Endothelial cell of umbilical vein (primary cell): ENCODE measurements at regions of chr5 and their contacts with region 1.

Region 1: GRCh38 chr5:96752341-96753016 is 55.3 kb downstream of the ERAP1 start:
- DNase-seq: peak; percentile 71
- H3K4me3 ChIP-seq: no peak overlapping the region
- H3K27ac ChIP-seq: no peak overlapping the region
- H3K4me1 ChIP-seq: peaks cover 3% of the 10 kb centered on the region
- H3K27me3 ChIP-seq: no peaks in the 10 kb centered on the region
- CTCF ChIP-seq: peak; percentile 36 to 55
- POLR2A ChIP-seq: no peak

Region 2: DNA sequence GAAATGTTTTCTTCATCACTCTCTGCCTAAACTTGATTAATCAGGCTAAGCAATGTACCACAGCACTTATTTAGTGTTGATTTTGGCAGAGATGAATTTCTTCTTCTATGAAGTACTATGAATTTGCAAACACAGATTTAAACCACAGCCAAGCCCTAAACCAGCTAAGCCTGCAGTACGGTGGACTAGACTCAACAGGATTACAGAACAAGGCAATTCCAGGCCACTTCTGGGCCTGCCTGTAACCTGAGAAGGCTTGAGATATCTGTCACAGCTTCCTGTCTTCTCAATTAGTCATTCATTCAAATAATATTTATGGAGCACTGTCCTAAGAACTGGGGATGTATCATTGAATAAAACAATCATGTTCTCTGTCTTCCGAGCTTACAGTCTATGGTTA is 122.7 kb before region 1 on chr5:
- CTCF ChIA-PET with region 1: no interaction called
- POLR2A ChIA-PET with region 1: no interaction called
- dilution Hi-C with region 1: no loop called
- intact Hi-C with region 1: no loop called
- DNase-seq: peak; percentile 44
- H3K4me3 ChIP-seq: no peak overlapping the region
- H3K27ac ChIP-seq: no peak overlapping the region
- H3K4me1 ChIP-seq: peaks cover 12% of the 10 kb centered on the region
- H3K27me3 ChIP-seq: no peaks in the 10 kb centered on the region
- CTCF ChIP-seq: no peak
- POLR2A ChIP-seq: no peak

Region 3: DNA sequence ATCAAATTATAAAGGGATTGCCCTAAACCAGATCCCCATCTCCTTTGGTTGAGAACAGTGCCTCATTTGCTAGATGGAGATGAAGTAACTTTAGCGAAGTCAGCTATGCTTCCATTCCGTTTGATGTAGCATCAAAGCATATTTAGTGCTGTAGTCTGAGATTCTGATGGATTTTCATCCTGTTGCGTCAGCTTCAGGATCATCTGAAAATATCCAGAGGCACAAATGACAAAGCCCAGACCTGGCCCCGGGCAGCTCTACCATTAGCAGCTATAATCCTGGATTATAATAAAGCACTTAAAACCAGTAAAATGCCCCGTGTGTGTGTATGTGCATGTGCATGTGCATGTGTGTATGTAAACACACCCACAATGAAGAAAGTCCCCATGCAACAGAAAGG is 10.5 kb after region 1 on chr5:
- CTCF ChIA-PET with region 1: interaction called, 62 read pairs
- POLR2A ChIA-PET with region 1: no interaction called
- dilution Hi-C with region 1: no loop called
- intact Hi-C with region 1: no loop called
- DNase-seq: no peak
- H3K4me3 ChIP-seq: no peak overlapping the region
- H3K27ac ChIP-seq: no peak overlapping the region
- H3K4me1 ChIP-seq: no peaks in the 10 kb centered on the region
- H3K27me3 ChIP-seq: no peaks in the 10 kb centered on the region
- CTCF ChIP-seq: no peak
- POLR2A ChIP-seq: no peak

Region 4: GRCh38 chr5:96781031-96781937 is 28.8 kb after region 1 on chr5:
- CTCF ChIA-PET with region 1: interaction called, 11 read pairs
- POLR2A ChIA-PET with region 1: no interaction called
- dilution Hi-C with region 1: no loop called
- intact Hi-C with region 1: no loop called
- DNase-seq: peak; percentile 53
- H3K4me3 ChIP-seq: no peak overlapping the region
- H3K27ac ChIP-seq: peak overlapping the region; percentile 63
- H3K4me1 ChIP-seq: peaks cover 19% of the 10 kb centered on the region
- H3K27me3 ChIP-seq: no peaks in the 10 kb centered on the region
- CTCF ChIP-seq: no peak
- POLR2A ChIP-seq: no peak

Region 5: DNA sequence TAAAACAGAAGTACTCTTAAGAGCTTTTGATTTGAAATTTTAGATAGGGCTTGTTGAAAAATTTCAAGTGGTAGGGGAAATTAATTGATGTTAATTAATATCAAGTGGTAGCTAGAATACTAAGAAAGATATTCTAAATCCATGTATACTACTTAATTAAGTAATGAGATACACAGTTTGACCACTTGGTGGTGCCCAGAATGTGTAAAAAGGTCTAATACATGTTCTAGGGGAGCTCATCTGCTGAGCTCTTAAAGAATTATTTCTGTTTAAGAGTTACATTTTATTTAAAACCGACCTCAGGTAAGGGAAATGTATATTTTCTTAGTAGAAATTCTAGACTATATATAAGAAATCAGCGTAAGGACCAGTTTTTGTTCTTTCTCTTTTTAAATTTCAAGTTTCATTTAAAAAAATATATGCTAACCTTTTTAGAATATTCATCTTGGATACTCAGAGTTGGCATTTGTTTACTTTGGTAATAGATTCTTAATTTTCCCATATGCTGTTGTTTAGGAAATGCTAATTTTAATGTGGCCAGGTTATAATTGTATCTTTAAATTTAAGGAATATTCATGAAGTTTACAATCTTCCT is 244.9 kb after region 1 on chr5:
- CTCF ChIA-PET with region 1: interaction called, 19 read pairs
- POLR2A ChIA-PET with region 1: no interaction called
- dilution Hi-C with region 1: no loop called
- intact Hi-C with region 1: loop called (anchors 10 kb)
- DNase-seq: peak; percentile 66
- H3K4me3 ChIP-seq: no peak overlapping the region
- H3K27ac ChIP-seq: no peak overlapping the region
- H3K4me1 ChIP-seq: no peaks in the 10 kb centered on the region
- H3K27me3 ChIP-seq: no peaks in the 10 kb centered on the region
- CTCF ChIP-seq: peak; percentile 27 to 34
- POLR2A ChIP-seq: no peak

Region 6: DNA sequence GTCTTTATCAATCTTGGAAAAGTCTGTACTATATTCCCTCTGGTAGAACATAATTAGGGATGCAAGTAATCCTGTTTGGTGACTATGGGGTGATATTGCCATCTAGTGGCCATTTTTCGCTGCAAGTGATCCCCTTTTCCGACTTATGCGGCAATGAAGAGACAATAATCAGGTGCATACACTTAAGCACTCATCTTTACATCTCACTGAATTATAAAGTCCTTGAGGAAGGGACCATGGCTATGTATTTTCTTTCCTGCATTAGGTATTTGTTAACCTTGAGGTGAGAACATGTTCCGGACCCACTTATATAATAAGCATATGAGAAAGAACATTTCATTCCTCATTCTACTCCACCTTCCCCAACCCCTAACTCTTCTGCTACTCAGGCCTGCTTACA is 409.6 kb after region 1 on chr5:
- CTCF ChIA-PET with region 1: interaction called, 51 read pairs
- POLR2A ChIA-PET with region 1: no interaction called
- dilution Hi-C with region 1: no loop called
- intact Hi-C with region 1: loop called (anchors 1 kb)
- DNase-seq: peak; percentile 86
- H3K4me3 ChIP-seq: no peak overlapping the region
- H3K27ac ChIP-seq: no peak overlapping the region
- H3K4me1 ChIP-seq: no peaks in the 10 kb centered on the region
- H3K27me3 ChIP-seq: no peaks in the 10 kb centered on the region
- CTCF ChIP-seq: peak; percentile 68 to 79
- POLR2A ChIP-seq: no peak